ENCODE measurements at regions of chr6 and their contacts with region 1.

Region 1: DNA sequence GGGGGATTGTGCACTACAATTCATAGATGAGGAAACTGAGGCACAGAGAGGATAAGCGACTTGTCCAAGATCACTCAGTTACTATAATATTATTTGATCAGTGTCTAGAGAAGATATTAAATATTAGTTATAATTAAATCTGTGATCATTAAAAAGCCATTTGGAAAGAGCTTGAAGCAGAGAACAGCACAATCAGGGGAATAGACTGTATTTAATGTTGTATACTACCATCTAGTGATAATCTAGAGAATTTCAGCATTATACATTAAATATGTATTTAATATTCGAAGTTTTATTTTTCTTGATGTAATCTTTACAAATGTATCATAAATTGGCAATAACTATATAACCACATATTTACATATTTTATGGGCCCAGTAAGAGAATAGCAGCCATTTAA is 20.1 kb upstream of the MTCL3 start:
- DNase-seq: no peak

Region 2: GRCh38 chr6:127302728-127303660 is 236.3 kb before region 1 on chr6:
- intact Hi-C with region 1: loop called (anchors 10 kb)
- DNase-seq: no peak

Region 3: GRCh38 chr6:128007658-128008057 is 468.4 kb after region 1 on chr6:
- intact Hi-C with region 1: no loop called
- DNase-seq: no peak

Measured in cardiac septum (tissue), 1 donor.